ENCODE measurements at regions of chr2 and their contacts with region 1.

Region 1: DNA sequence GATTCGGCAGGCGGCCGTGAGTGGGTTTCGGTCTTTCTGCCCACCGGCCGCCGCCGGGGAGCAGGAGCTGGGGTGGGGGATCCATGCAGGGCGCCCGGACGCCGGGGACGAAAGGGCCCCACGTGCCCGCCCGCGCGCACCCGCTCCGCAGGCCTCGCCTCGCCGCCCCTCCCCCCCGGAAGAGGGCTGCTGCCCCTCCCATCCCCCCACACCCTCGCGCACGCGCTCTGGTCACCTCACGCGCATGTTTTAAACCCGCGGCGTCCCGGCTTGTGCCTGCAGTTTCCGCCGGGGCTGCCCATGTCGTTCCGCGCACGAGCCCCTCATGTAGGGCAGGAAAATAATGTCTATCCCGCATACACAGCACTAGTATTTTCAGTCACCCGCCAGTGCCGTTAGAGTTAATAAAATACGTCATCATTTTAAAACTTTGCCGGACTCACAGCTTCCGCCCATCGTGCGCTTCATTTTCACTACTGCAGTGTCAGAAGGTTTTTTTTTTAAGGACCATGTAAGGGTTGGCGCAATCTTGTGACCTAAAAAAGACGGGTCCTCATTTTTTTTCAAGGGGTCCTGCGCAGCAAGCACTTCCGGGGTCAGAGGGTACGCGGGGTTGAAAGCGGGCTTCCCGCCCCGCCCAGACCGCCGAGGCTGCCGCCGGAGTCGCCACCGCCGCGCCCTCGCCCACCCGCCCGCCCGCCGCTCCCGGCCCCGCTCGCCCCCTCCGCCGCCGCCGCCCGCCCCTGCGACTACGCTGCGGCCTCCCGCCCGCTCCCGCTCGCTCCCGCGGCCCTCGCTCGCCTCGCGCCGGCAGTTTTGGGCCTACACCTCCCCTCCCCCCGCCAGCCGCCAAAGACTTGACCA is at the start of gene PCBP1:
- DNase-seq: peak; percentile 96 to 98
- H3K4me3 ChIP-seq: peak within 1 kb of the TSS; percentile 68
- H3K4me3 Mint-ChIP-seq: peak within 1 kb of the TSS; percentile 92
- H3K27ac Mint-ChIP-seq: peak within 1 kb of the TSS; percentile 100
- H3K4me1 ChIP-seq: peaks cover 17% of the 10 kb centered on the region; the same call in 1 of the 2 replicates
- H3K4me1 Mint-ChIP-seq: peaks cover 29% of the 10 kb centered on the region
- H3K27me3 ChIP-seq: no peaks in the 10 kb centered on the region
- H3K27me3 Mint-ChIP-seq: no peaks in the 10 kb centered on the region
- CTCF ChIP-seq: no peak
- total RNA-seq, gene PCBP1: 308 and 319 TPM in 2 replicates

Region 2: GRCh38 chr2:70104231-70105111 is 17.4 kb after region 1 on chr2:
- CTCF ChIA-PET with region 1: interaction called, 4 read pairs
- POLR2A ChIA-PET with region 1: interaction called, 15 read pairs
- intact Hi-C with region 1: loop called (anchors 1 kb)
- DNase-seq: peak; percentile 66 to 68
- H3K4me3 ChIP-seq: no peak overlapping the region
- H3K4me3 Mint-ChIP-seq: peak overlapping the region; percentile 47
- H3K27ac Mint-ChIP-seq: peak overlapping the region; percentile 68
- H3K4me1 ChIP-seq: peaks cover 30% of the 10 kb centered on the region
- H3K4me1 Mint-ChIP-seq: peaks cover 20% of the 10 kb centered on the region
- H3K27me3 ChIP-seq: no peaks in the 10 kb centered on the region
- H3K27me3 Mint-ChIP-seq: no peaks in the 10 kb centered on the region
- CTCF ChIP-seq: no peak

Region 3: GRCh38 chr2:70124983-70125480 is 38.0 kb after region 1 on chr2:
- CTCF ChIA-PET with region 1: no interaction called
- POLR2A ChIA-PET with region 1: interaction called, 24 read pairs
- intact Hi-C with region 1: loop called (anchors 2 kb)
- DNase-seq: peak; percentile 72 to 76
- H3K4me3 ChIP-seq: peak overlapping the region; percentile 84
- H3K4me3 Mint-ChIP-seq: peak overlapping the region; percentile 91
- H3K27ac Mint-ChIP-seq: peak overlapping the region; percentile 99
- H3K4me1 ChIP-seq: peaks cover 29% of the 10 kb centered on the region
- H3K4me1 Mint-ChIP-seq: peaks cover 35% of the 10 kb centered on the region
- H3K27me3 ChIP-seq: no peaks in the 10 kb centered on the region
- H3K27me3 Mint-ChIP-seq: no peaks in the 10 kb centered on the region
- CTCF ChIP-seq: no peak

Region 4: GRCh38 chr2:70190418-70191243 is 103.6 kb after region 1 on chr2 and contains the start of gene C2orf42:
- CTCF ChIA-PET with region 1: no interaction called
- POLR2A ChIA-PET with region 1: interaction called, 10 read pairs
- intact Hi-C with region 1: loop called (anchors 2 kb)
- DNase-seq: peak; percentile 97 to 98
- H3K4me3 ChIP-seq: peak within 1 kb of the TSS; percentile 95
- H3K4me3 Mint-ChIP-seq: peak within 1 kb of the TSS; percentile 90
- H3K27ac Mint-ChIP-seq: peak within 1 kb of the TSS; percentile 97
- H3K4me1 ChIP-seq: 0 out of 2 replicates have a peak, but pooled peaks cover 6% of the 10 kb centered on the region
- H3K4me1 Mint-ChIP-seq: peaks cover 10% of the 10 kb centered on the region
- H3K27me3 ChIP-seq: no peaks in the 10 kb centered on the region
- H3K27me3 Mint-ChIP-seq: no peaks in the 10 kb centered on the region
- CTCF ChIP-seq: peak in 1 of 2 experiments; percentile 21
- total RNA-seq, gene C2orf42: 12.7 and 14.8 TPM in 2 replicates

Region 5: GRCh38 chr2:70248181-70248847 is 161.2 kb after region 1 on chr2 and contains the start of gene TIA1:
- CTCF ChIA-PET with region 1: no interaction called
- POLR2A ChIA-PET with region 1: no interaction called
- intact Hi-C with region 1: loop called (anchors 5 kb)
- DNase-seq: peak; percentile 98 to 99
- H3K4me3 ChIP-seq: peak within 1 kb of the TSS; percentile 61
- H3K4me3 Mint-ChIP-seq: peak within 1 kb of the TSS; percentile 89
- H3K27ac Mint-ChIP-seq: peak within 1 kb of the TSS; percentile 95
- H3K4me1 ChIP-seq: peaks cover 6% of the 10 kb centered on the region; the same call in 1 of the 2 replicates
- H3K4me1 Mint-ChIP-seq: peaks cover 18% of the 10 kb centered on the region
- H3K27me3 ChIP-seq: no peaks in the 10 kb centered on the region
- H3K27me3 Mint-ChIP-seq: peaks cover 3% of the 10 kb centered on the region
- CTCF ChIP-seq: no peak
- total RNA-seq, gene TIA1: 146 and 149 TPM in 2 replicates

Measured in Caco-2 (cell line).